ENCODE measurements at regions of chr9 and their contacts with region 1.

Region 1: GRCh38 chr9:111037381-111038305 is 627 bp downstream of the LPAR1 start:
- DNase-seq: peak; percentile 48
- H3K4me3 ChIP-seq: peak overlapping the region; percentile 59 to 87 (median 66)
- H3K27ac ChIP-seq: peak overlapping the region; percentile 41
- H3K4me1 ChIP-seq: peaks cover 35% of the 10 kb centered on the region
- H3K27me3 ChIP-seq: no peaks in the 10 kb centered on the region
- CTCF ChIP-seq: no peak

Region 2: DNA sequence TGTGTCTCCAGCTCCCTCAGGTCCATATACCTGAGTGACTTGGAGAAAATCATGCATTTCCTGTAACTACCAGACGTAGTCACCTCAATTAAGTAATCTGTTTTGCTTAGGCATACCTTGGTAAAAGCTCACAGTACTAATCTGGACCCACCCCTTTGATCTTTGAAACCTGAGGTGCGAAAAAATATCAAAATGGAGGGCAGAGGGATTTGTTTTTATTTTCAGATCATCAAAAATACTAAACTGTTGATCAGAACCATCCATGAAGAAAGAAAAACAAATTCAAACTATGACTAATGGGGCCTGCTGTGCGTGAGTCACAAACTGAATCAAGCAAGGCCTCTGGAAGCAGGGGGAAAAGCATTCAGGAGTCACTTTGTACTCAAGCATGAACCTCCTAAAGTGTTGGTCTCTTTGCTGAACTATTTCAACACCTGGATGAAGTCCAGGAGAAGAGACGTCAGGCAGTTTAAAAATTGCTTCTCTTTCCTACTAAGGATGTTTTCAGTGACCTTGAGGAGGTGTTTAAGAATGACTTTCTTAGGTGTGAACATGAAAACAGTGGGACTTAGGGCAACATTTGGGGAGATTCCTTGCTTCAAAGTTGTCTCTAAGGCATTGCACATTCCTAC is 292.8 kb before region 1 on chr9:
- CTCF ChIA-PET with region 1: no interaction called
- dilution Hi-C with region 1: no loop called
- in situ Hi-C with region 1: no loop called
- intact Hi-C with region 1: loop called (anchors 5 kb)
- DNase-seq: peak; percentile 92
- H3K4me3 ChIP-seq: no peak overlapping the region
- H3K27ac ChIP-seq: peak overlapping the region; percentile 59
- H3K4me1 ChIP-seq: peaks cover 49% of the 10 kb centered on the region
- H3K27me3 ChIP-seq: no peaks in the 10 kb centered on the region
- CTCF ChIP-seq: no peak

Region 3: DNA sequence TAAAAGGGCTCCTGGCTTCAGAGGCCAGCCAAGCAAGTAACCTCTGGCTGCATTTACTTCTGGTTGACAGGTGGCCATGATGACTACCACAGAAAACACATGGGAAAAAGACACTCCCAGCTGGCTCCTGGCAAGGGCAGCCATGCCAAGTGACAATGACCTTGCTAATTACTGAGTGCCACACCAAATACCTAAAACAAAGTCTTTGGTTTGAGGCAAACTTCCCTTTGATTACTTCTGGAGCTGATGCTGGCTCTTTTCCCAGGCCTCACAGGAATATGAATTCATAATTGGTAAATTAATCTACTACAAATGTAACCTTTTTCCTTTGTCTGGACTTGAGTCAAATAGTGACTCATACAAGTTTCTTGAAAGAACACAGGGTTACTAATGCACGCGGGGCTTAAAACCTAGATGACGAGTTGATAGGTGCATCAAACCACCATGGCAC is 60.4 kb before region 1 on chr9:
- CTCF ChIA-PET with region 1: no interaction called
- dilution Hi-C with region 1: no loop called
- in situ Hi-C with region 1: no loop called
- intact Hi-C with region 1: loop called (anchors 2 kb)
- DNase-seq: peak; percentile 90
- H3K4me3 ChIP-seq: no peak overlapping the region
- H3K27ac ChIP-seq: peak overlapping the region; percentile 52
- H3K4me1 ChIP-seq: peaks cover 23% of the 10 kb centered on the region
- H3K27me3 ChIP-seq: no peaks in the 10 kb centered on the region
- CTCF ChIP-seq: no peak

Region 4: DNA sequence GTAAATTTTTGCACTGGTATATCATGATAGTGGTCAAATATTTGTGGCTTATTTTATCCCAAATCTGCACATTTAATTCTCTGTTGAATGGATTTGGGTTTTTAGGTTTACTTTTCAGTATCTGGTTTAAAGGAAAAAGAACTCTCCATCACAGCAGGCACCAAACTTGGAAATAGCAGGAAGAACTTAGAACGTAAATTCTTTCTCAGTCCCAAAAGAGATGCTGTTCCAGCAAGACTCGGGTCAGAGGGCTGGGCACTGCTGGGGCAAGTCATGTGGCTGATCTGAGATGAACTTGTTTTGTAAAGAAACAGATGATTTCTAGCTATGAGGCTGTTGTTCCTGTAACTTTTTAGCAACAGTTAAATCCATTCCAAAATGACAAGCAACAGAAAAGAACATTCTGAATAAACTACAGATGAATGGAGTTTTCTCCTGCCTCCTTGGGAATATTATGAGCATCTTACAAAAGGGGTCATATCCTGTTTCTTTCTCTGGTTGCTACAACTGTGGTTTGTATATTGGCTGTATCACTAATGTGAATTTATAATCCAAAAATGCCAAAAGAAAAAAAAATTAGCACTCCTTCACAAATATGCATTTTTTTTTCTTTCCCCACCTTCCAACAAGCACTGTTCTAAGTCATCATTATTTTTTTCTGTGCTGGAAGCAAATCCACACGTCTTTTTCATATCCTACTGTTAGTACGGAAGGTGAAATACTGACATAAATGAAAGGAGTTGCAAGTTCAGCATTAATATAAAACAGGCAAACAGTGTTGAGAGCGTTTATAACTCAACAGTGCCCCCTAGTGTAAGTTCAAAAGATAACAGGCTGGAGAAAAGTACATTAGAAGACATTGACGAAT is 261.3 kb after region 1 on chr9:
- CTCF ChIA-PET with region 1: no interaction called
- dilution Hi-C with region 1: no loop called
- in situ Hi-C with region 1: no loop called
- intact Hi-C with region 1: loop called (anchors 1 kb)
- DNase-seq: peak; percentile 39
- H3K4me3 ChIP-seq: no peak overlapping the region
- H3K27ac ChIP-seq: no peak overlapping the region
- H3K4me1 ChIP-seq: no peaks in the 10 kb centered on the region
- H3K27me3 ChIP-seq: no peaks in the 10 kb centered on the region
- CTCF ChIP-seq: peak; percentile 62 to 68